Sigmoid colon (tissue), 7 donors: ENCODE measurements at regions of chr6 and their contacts with region 1.

Region 1: DNA sequence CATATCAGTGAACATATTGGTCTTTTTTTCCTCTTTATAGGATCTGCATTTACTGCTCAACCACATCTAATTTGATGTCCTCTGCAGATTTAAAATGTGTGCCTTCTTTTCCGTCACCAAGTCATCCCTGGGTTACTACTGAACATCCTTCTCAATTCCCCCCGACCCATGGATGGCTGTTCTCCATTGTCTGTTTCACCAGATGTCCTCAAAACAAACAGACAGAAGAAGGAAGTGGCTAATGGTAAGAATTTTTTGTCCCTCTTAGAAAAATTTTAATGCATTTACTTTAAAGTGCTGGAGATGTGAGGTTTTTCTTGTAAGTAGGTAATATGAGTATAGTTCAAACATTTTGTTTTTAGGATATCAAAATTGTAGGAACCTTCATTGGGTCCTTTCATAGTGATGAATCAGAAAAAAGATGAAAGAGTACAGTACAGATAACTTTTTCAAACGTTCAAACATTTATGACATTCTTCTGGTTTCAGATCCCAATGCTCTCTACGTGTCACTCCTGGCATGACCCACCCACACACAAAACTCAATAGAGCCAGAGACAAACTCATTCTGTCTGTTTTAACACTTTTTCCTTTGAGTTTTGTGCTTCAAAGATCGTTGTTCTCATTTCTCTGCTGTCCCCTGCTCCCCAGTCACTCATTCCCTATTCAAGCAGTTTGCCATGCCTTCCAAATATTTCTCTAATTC is 276.4 kb downstream of the PRL start:
- DNase-seq: no peak
- H3K4me3 ChIP-seq: no peak overlapping the region
- H3K27ac ChIP-seq: no peak overlapping the region
- H3K4me1 ChIP-seq: peaks cover 0 to 20% (median 9%) of the 10 kb centered on the region in 4 donors
- H3K27me3 ChIP-seq: no peaks in the 10 kb centered on the region
- CTCF ChIP-seq: no peak
- EP300 ChIP-seq: no peak
- POLR2A ChIP-seq: no peak

Region 2: DNA sequence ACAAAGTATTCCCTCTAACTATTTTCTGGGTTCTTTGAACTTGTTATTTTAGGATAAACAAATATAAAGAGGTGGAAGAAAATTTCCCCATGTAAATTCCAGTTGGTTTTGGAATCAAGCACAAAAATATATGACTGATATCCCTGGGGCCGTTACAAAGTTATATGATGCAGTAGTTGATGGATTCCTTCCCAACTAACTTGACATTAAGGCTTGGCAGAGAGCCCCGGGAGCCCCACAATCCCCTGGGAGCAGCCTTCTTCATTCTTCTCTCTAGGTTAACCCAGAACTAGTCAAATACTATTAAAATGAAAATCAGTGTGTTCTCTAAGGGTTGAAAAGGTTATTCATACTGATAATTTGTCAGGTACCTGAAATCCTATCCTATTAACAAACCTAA is 935.8 kb before region 1 on chr6:
- intact Hi-C with region 1: no loop called
- DNase-seq: no peak
- H3K4me3 ChIP-seq: no peak overlapping the region
- H3K27ac ChIP-seq: no peak overlapping the region
- H3K4me1 ChIP-seq: no peaks in the 10 kb centered on the region
- H3K27me3 ChIP-seq: no peaks in the 10 kb centered on the region
- CTCF ChIP-seq: no peak
- EP300 ChIP-seq: no peak
- POLR2A ChIP-seq: no peak

Region 3: DNA sequence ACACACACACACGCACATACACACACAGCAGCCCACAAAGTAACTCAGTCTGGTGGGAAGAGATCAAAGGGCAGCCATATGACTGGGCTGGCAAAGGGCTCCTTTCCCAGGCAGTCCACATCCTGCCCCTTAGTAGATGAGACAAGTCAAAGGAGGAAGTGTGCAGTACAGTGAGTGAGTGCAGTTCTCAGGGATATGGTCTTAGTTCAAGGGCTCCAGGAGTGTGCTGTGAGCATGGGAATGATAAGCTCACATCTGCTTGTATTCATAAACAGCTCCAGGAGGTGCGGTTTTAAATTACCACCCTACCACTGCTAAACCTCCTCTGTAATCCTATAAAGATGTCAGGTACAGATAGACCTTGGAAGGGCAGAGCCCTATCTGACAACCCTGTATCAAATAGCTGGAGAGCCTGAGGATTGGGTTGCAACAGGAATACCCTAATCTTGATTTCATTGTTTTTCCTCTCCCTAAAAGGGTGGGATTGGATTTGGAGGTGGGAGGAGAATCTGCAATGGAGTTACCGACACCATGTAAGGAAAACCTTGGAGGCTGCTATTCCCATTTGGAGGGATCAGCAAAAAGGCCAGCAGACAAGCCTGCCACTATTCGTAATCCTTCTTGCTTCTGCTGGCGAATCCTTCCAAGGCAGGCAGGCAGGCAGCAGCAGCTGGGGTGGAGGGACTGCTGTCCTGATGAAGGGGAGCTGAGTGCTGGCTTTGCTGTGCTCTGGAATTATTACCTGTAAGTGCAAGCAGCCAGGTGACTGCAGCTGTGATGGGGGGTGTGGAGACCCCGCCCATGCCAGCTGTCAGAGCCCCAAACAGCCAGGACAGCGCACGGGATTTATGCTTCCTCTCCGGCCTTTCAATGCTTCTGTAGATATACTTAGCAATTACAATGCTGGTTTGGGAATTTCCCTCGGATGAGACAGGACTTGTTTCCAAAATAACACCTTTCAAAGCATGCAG is 66.3 kb before region 1 on chr6:
- intact Hi-C with region 1: loop called (anchors 1 kb)
- DNase-seq: no peak
- H3K4me3 ChIP-seq: peak overlapping the region in 2 of 4 donors; percentile 22 to 35
- H3K27ac ChIP-seq: peak overlapping the region; percentile 6 to 82 (median 73)
- H3K4me1 ChIP-seq: peaks cover 0 to 38% (median 30%) of the 10 kb centered on the region in 4 donors
- H3K27me3 ChIP-seq: no peaks in the 10 kb centered on the region
- CTCF ChIP-seq: no peak
- EP300 ChIP-seq: no peak
- POLR2A ChIP-seq: no peak